ENCODE measurements at regions of chr11 and their contacts with region 1.

Region 1: DNA sequence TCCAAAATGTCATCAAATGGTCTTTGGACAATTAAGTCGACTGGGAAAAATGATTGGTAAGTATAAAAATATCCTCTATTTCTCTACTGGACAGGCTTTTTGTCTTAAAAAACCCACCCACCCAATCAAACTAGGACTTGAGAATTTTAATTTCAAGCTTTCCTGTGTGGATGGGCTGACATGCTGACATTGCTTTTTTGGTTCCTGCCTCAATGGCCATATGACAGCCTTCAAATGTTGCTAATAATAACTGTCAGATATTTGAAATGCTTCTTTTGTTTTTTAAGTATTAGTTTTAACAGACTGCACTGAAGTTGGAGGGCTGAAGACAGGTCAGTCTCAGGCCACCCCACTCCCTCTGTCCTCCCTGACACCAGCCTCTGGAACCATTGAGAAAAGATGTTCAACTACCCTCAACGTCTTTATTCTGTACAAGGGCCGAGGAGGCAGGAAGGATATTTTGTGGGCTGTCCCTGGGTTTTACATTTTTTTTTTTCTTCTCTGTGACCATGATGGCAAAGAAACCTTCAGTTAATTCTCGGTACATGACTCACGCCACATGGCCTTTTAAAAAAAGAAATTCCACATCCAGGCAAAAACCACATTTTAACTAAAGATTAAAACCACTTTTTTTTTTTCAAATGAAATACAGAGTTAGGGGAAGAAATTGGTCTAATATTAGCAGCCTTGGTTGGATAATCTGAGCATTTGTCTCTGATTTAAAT is 130.4 kb downstream of the SLC1A2 start:
- DNase-seq: no peak
- H3K4me3 Mint-ChIP-seq: peak overlapping the region; percentile 15
- H3K27ac Mint-ChIP-seq: peak overlapping the region; percentile 65
- H3K4me1 Mint-ChIP-seq: peaks cover 47% of the 10 kb centered on the region
- H3K27me3 Mint-ChIP-seq: peaks cover 8% of the 10 kb centered on the region

Region 2: GRCh38 chr11:34916015-34916842 is 372.8 kb before region 1 on chr11 and contains the starts of genes APIP and PDHX:
- intact Hi-C with region 1: no loop called
- DNase-seq: peak; percentile 90
- H3K4me3 Mint-ChIP-seq: peak within 1 kb of the TSS; percentile 98
- H3K27ac Mint-ChIP-seq: peak within 1 kb of the TSS; percentile 91
- H3K4me1 Mint-ChIP-seq: peaks cover 42% of the 10 kb centered on the region
- H3K27me3 Mint-ChIP-seq: no peaks in the 10 kb centered on the region
- total RNA-seq, gene APIP: 26.3 and 26.8 TPM in 2 replicates
- total RNA-seq, gene PDHX: 32.0 TPM in 2 replicates

Region 3: DNA sequence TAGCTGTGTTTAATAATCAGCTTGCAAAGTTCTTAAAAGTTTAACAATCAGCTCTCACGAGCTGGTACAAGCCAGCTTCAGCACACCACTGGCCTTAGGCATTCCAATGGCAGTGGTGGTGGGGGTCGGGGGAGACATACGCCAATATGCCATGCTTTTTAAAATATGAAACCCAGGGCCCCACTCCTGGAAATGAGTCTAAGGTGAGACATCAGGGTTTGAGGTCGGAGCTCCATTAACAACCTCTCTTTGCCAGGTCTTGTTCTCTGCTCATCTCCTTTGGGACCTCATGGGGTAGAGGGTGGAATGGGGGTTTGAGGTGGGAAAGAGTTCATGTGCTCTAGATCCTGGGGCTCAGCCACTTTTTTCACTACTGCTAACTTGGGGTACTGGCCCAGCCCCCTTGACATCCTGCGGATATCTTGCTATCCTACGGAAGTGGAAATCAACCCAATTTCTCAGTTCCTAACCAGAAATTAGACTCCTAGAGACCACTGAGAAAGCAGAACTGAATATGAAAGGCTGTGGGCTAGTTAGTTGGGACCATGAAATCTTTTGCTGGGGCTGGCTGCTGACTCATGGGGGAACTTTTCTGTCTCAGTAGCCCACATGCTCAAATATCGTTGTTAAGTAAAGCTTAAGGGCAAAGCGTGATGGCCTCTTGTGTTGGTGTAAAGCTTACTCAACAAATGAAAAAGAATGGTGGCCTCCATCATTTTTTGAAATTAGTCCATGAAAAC is 282.4 kb before region 1 on chr11:
- intact Hi-C with region 1: loop called (anchors 5 kb)
- DNase-seq: no peak
- H3K4me3 Mint-ChIP-seq: no peak overlapping the region
- H3K27ac Mint-ChIP-seq: peak overlapping the region; percentile 61
- H3K4me1 Mint-ChIP-seq: peaks cover 59% of the 10 kb centered on the region
- H3K27me3 Mint-ChIP-seq: peaks cover 18% of the 10 kb centered on the region

Region 4: DNA sequence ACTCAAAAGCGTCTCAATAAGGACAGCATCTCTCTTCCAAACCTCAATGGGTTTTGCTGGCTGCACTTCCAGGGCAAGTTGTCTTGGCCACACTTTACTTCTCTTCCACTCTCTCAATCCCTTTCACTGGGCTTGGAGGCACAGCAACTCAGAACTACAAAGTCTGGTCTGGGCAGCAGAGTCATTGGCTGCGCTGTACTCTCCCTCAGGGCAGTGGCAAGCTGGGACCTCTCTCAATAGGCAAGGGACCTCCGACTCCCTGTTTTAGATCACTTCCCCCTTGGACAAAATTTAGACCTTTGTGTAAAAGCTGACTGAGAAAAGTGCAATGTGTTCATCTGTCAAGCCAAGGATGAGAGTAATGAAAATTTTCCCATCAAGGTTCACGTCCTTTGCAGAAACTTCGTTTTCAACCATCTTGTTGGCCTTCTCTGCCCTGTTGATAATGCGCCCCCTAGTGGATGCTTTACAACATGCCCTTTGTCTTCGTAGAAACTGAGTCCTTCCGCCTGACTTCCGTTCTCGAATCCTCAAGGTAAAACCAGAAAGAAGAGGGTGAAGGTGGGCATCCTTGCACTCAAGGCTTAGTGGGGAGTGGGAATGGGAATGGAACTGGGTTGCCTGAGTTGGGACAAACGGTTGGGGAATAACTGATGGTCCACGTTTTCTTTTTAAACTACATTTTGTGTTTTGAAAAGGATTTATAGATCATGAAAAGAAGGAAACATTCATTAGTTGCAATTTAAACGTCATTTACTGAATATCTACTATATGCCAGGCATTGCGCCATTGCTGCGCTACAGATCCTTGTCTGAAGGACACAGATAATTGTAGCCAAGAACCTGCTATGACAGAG is 50.9 kb before region 1 on chr11:
- intact Hi-C with region 1: loop called (anchors 5 kb)
- DNase-seq: peak; percentile 48
- H3K4me3 Mint-ChIP-seq: peak overlapping the region; percentile 42
- H3K27ac Mint-ChIP-seq: peak overlapping the region; percentile 36
- H3K4me1 Mint-ChIP-seq: peaks cover 67% of the 10 kb centered on the region
- H3K27me3 Mint-ChIP-seq: no peaks in the 10 kb centered on the region

Region 5: GRCh38 chr11:35305670-35306382 is 16.8 kb after region 1 on chr11:
- intact Hi-C with region 1: loop called (anchors 2 kb)
- DNase-seq: no peak
- H3K4me3 Mint-ChIP-seq: no peak overlapping the region
- H3K27ac Mint-ChIP-seq: no peak overlapping the region
- H3K4me1 Mint-ChIP-seq: peaks cover 28% of the 10 kb centered on the region
- H3K27me3 Mint-ChIP-seq: peaks cover 4% of the 10 kb centered on the region

Region 6: DNA sequence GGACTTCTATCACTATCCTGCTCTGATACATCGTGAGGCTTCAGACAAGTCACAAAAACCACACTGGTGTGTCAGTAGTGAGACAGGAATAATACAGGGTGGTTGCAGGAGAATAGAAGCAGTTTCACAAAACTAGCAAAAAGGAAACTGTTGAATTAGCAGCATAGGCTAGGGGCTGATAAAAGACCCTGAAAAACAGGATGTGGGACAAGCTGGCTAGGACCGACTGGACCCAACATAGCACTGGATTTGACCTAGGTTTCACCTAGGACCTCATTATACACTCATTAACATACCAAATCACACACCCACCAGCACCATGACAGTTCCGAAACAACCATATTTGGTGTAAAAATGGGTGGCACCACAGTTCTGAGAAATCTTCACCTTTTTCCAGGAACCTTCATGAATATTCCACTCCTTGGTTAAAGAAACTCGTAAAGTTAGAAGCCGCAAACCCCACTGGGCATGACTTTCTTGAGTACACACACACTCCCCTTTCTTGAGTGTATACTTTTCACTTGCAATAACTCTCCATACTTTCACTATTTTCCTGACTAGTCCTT is 54.1 kb after region 1 on chr11:
- intact Hi-C with region 1: loop called (anchors 5 kb)
- DNase-seq: peak; percentile 65
- H3K4me3 Mint-ChIP-seq: peak overlapping the region; percentile 27
- H3K27ac Mint-ChIP-seq: peak overlapping the region; percentile 79
- H3K4me1 Mint-ChIP-seq: peaks cover 46% of the 10 kb centered on the region
- H3K27me3 Mint-ChIP-seq: peaks cover 9% of the 10 kb centered on the region

Region 7: DNA sequence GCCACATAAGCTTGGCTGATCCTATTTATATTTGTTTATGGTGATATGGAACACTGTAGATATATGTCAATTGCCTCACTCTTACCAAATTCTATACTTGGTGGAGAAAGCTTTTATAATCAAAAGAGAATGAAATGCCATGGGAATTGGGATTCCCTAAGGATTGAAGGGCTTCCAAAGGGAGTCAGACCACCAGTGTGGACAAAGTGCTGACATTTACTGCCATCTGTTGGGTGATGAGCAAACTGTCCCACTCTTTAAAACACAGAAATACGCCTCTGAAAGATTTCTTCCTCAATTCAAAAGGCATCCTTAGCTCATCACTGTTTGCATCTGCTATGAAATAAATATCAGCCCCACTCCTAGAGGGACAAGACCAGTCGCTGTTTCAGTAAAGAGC is 123.3 kb after region 1 on chr11:
- intact Hi-C with region 1: no loop called
- DNase-seq: no peak
- H3K4me3 Mint-ChIP-seq: no peak overlapping the region
- H3K27ac Mint-ChIP-seq: no peak overlapping the region
- H3K4me1 Mint-ChIP-seq: no peaks in the 10 kb centered on the region
- H3K27me3 Mint-ChIP-seq: peaks cover 61% of the 10 kb centered on the region

Region 8: DNA sequence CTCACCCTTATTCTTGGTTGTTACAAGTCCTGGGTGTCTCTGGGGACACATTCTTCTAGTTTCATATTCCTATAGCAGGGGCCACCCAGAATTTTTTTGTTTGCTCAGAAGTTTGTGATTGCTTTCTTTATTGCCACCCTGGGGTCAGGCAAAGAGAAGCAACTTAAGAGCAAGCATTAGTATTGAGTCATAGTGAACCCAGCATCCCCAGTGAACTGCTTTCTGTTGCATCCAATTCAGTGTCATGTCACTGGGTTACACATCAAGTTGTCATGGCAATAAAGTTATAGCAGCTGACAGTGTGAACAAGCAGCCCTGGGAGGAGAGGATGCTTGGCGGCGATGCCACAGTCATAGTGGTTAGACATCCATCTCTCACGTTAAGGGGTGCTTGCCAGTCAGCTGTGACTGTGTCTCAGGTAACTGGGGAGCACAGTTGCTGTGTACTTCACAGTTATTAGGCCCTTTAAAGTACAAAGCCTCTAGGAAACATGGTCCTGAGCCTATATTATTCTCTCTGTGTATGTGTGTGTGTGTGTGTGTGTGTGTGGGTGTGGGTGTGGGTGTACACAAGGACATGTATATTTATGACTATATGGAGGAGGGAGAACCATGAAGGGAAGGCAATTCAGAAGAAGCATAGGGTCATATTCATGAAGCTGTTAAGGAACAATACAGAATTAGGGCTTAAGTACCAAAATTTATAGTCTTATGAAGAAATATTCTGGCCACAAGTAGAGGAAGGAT is 426.1 kb after region 1 on chr11:
- intact Hi-C with region 1: no loop called
- DNase-seq: no peak
- H3K4me3 Mint-ChIP-seq: no peak overlapping the region
- H3K27ac Mint-ChIP-seq: no peak overlapping the region
- H3K4me1 Mint-ChIP-seq: no peaks in the 10 kb centered on the region
- H3K27me3 Mint-ChIP-seq: no peaks in the 10 kb centered on the region